ENCODE measurements at regions of chr17 and their contacts with region 1.

Region 1: DNA sequence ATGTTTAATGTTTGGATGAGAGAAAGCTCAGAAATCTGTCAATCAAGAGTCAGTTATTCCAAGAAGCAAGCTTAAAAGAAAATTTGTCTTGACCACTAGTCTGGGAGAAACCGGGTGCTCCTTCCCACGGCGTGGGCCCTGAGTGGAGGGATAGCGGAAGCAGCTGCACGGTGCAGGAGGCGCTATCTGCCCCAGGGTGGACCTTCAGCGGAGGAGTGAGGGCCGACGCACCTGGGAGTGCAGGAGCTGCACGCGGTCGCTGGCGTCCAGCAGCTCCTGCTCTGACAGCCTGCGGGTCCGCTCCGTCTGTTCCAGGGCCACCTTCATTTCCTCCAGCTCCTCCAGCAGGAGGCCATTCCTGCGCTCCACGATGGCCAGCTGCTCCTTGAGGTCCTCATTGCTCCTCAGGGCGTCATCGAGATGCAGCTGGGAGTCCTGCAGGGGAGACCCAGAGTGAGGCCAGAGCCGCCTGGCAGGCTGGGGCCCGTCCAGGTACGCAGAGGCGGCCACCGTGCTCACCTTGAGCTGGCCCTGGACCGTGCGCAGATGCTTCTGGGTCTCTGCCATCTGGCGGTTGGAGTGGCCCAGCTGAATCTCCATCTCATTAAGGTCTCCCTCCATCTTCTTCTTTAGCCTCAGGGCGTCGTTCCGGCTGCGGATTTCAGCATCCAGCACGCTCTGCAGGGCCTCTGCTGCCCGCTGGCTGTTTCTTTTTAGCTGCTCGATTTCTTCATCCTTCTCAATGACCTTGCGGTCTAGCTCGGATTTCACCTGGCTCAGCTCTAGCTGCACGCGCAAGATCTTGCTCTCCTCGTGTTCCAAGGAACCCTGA is 63.6 kb downstream of the MYH13 start:
- DNase-seq: no peak
- H3K4me3 ChIP-seq: no peak overlapping the region
- H3K27ac ChIP-seq: no peak overlapping the region
- H3K4me1 ChIP-seq: no peaks in the 10 kb centered on the region
- H3K27me3 ChIP-seq: no peaks in the 10 kb centered on the region
- CTCF ChIP-seq: no peak

Region 2: DNA sequence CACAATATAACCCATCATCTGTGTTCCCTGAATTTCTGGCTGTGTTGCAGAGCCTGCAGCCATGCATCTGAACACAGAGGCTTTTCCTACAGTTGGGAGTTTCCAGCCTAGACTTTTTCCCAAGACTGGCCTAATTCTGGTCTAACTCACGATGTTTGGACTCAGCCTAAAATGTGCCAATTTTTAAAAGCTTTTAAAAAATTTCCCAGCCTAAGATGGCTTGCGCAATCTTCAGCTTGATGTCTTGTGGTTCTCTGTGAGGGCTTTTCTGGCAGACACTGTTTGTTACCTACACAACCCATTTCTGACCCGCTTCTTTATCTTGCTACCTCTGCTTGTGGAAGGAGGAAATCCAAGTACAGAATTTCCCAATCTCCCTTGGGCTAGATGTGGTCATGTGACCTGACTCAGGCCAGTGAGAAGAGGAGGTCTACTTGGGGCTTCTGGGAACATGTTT is 38.1 kb before region 1 on chr17:
- CTCF ChIA-PET with region 1: no interaction called
- dilution Hi-C with region 1: loop called (anchors 5 kb)
- in situ Hi-C with region 1: no loop called
- intact Hi-C with region 1: no loop called
- DNase-seq: no peak
- H3K4me3 ChIP-seq: no peak overlapping the region
- H3K27ac ChIP-seq: no peak overlapping the region
- H3K4me1 ChIP-seq: no peaks in the 10 kb centered on the region
- H3K27me3 ChIP-seq: no peaks in the 10 kb centered on the region
- CTCF ChIP-seq: no peak

Measured in mammary epithelial cell (primary cell).